PC-9 (cell line): ENCODE measurements at regions of chr1 and their contacts with region 1.

Region 1: DNA sequence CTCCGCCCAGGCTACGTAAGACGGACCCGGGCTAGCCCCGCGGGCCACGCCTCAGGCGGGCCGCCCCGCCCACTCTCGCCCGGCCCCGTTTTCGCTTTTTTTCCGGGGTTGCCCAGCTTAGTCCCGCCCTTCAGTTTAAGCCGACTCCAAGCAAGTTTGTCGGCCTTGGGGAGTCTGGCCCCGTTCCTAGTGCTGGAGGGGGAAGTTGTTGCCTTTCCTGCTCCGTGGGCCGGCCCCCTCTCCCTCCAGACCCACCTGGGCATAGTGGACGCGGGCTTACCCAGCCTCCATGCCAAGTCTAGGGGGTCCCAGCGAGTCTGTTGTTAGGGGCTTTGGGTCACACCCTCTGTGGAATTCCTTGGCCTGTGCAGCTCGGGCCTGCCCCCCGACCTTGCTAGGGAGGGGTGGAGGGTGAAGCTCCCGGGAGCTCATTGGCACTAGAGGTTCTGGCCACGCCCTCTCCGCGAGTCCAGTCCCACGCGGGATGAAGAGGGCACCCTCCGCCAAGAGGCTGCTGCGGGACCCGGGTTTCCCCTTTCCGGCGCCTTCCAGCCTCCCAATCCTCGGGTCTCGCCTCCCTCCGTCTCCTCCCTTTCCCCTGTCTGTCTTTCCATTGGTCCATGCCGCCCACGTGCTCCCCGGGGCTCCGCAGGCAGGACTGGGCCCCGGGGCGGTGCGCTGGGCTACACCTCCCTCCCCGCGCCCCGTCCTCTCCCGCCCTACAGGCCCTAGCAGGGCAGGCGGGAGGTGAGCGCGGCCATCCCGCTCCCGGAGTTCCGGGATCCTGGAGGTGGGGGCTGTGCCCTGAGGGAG is 3.3 kb downstream of the RUSC1 start:
- DNase-seq: peak; percentile 86 to 96
- H3K4me3 ChIP-seq: peak overlapping the region; percentile 96
- H3K27ac ChIP-seq: peak overlapping the region; percentile 49
- H3K4me1 ChIP-seq: peaks cover 9% of the 10 kb centered on the region; the same call in 1 of the 2 replicates
- H3K27me3 ChIP-seq: no peaks in the 10 kb centered on the region
- CTCF ChIP-seq: no peak

Region 2: GRCh38 chr1:155172732-155173477 is 151.1 kb before region 1 on chr1 and contains the start of gene KRTCAP2:
- CTCF ChIA-PET with region 1: no interaction called
- POLR2A ChIA-PET with region 1: interaction called, 3 read pairs
- intact Hi-C with region 1: loop called (anchors 2 kb)
- DNase-seq: peak; percentile 89 to 93
- H3K4me3 ChIP-seq: peak within 1 kb of the TSS; percentile 89
- H3K27ac ChIP-seq: peak within 1 kb of the TSS; percentile 59
- H3K4me1 ChIP-seq: peaks cover 30% of the 10 kb centered on the region
- H3K27me3 ChIP-seq: no peaks in the 10 kb centered on the region
- CTCF ChIP-seq: peak; percentile 94
- total RNA-seq, gene KRTCAP2: 112 and 156 TPM in 2 replicates

Region 3: DNA sequence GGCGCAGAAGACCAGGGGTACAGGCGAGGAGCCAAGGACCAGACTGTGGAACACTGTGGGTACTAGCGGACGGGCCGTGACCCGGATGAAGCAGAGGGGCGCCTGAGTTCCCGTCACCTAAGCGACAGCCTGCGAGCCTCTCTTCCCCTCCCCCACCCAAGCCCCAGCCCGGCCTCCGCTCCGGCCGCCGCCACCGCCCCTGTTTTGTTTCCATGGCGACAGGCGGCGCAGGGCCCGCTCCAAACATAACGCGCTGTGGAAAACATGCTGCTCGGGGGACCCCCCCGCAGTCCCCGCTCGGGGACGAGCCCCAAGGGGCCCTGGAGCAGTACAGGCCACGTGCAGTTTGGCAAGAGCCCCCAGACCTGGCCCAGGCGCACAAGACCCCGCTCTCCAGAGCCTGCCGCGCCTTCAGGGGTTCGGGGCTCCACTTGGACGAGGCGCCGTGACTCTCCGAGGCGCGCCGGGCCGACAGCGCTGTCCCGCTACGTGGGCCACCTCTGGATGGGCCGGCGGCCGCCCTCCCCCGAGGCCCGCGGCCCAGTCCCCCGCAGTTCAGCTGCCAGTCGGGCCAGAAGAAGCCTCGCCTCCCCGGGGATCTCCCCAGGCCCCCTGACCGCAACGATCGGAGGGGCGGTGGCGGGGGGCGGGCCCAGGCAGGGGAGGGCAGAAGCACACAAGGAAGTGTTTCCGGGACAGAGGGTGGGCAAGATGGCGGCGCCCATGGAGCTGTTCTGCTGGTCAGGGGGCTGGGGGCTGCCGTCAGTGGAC is 115.3 kb before region 1 on chr1 and contains the start of gene MTX1:
- CTCF ChIA-PET with region 1: no interaction called
- POLR2A ChIA-PET with region 1: no interaction called
- intact Hi-C with region 1: loop called (anchors 2 kb)
- DNase-seq: peak; percentile 60 to 85
- H3K4me3 ChIP-seq: peak within 1 kb of the TSS; percentile 78
- H3K27ac ChIP-seq: peak within 1 kb of the TSS; percentile 74
- H3K4me1 ChIP-seq: peaks cover 26% of the 10 kb centered on the region
- H3K27me3 ChIP-seq: no peaks in the 10 kb centered on the region
- CTCF ChIP-seq: no peak
- total RNA-seq, gene MTX1: 56.1 and 68.9 TPM in 2 replicates

Region 4: GRCh38 chr1:155261852-155262673 is 61.9 kb before region 1 on chr1 and contains the start of gene SCAMP3:
- CTCF ChIA-PET with region 1: no interaction called
- POLR2A ChIA-PET with region 1: interaction called, 3 read pairs
- intact Hi-C with region 1: loop called (anchors 5 kb)
- DNase-seq: peak; percentile 91 to 96
- H3K4me3 ChIP-seq: peak within 1 kb of the TSS; percentile 89
- H3K27ac ChIP-seq: peak within 1 kb of the TSS; percentile 54
- H3K4me1 ChIP-seq: peaks cover 18% of the 10 kb centered on the region
- H3K27me3 ChIP-seq: no peaks in the 10 kb centered on the region
- CTCF ChIP-seq: no peak
- total RNA-seq, gene SCAMP3: 56.9 and 64.1 TPM in 2 replicates

Region 5: DNA sequence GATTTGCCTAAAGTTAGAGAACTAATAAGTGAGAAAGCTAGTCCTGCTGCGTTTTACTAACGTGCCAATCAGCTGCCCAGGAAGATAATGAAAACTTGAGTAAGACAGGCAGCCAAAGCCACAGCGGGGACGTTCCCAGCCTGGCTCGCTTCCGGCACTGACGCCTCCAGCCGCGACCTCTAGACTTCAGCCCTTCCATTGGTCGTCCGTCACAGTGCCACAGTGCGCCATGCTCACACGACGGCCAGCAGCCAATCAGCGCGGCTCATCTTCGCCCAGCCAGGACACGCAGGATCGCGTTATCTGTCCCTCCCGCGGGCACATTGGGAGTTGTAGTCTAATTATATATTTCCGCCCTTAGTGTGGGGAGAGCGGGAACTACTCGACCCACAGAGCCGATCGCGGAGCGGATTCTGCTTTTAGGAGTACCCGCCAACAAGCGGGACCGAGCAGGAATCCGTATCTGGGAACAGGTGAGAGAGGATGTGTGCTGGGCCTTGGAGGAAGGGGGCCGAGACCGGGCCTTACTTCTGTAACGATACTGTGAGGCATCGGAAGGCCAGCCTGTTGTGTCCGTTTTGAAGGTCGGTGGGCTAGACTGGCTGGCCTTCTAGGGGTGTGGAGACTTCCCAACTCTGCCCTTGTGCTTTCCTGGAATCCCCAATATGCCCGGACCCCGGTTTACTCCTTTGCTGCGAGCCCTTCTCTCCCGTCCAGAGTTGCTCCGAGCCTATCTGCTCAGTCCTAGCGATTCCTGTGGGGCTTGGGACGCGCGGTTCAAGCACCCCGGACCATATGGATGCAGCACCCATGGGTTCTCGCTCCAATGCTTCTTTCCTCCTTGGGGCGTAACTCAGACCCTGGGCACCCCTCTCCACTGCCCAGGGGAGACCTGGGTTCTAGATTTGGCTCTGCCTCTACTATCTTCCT is 15.2 kb before region 1 on chr1 and contains the start of gene FDPS:
- CTCF ChIA-PET with region 1: no interaction called
- POLR2A ChIA-PET with region 1: interaction called, 24 read pairs
- intact Hi-C with region 1: loop called (anchors 1 kb)
- DNase-seq: peak; percentile 97
- H3K4me3 ChIP-seq: peak within 1 kb of the TSS; percentile 88
- H3K27ac ChIP-seq: peak within 1 kb of the TSS; percentile 91
- H3K4me1 ChIP-seq: peaks cover 26% of the 10 kb centered on the region
- H3K27me3 ChIP-seq: no peaks in the 10 kb centered on the region
- CTCF ChIP-seq: no peak
- total RNA-seq, gene FDPS: 397 and 568 TPM in 2 replicates

Region 6: DNA sequence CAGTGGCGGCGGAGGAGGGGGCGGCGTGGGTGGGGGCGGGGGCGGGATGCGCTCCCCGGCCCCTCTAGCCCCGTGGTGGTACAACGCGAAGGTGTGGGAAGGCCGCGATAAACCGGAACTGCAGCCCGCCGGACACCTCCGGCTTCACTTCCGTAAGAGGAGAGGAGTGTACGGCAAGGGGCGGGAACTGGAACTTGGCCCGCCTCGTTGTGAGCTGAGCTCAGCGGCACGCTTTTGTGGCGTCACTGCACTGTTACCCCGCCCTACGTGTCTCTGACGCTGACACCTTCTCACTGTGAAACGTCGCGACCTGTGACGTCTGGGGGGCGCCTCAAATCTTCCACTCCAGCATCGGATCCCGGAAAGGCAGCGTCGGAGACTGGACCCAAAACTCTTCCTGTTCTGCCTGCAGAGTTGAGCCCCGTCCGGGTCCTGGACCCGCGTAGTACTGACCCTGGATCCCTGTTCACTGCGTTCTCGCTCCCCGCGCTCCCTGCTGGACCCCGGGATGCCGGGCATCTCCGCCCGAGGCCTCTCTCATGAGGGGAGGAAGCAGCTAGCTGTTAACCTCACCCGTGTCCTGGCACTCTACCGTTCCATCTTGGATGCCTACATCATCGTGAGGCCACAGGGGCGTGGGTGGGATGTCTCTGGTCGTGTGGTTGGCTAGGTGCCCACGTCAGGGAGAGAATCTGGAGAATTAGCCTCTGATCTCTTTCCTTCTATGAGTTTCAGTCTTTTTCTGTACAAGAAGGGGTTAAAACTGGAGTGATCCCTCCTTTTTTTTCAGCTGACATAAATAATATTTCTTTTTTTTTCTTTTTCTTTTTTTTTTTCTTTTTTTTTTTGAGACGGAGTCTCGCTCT is 1404.8 kb after region 1 on chr1 and contains the start of gene ISG20L2:
- CTCF ChIA-PET with region 1: no interaction called
- POLR2A ChIA-PET with region 1: no interaction called
- intact Hi-C with region 1: no loop called
- DNase-seq: peak; percentile 93 to 94
- H3K4me3 ChIP-seq: peak within 1 kb of the TSS; percentile 90
- H3K27ac ChIP-seq: peak within 1 kb of the TSS; percentile 46
- H3K4me1 ChIP-seq: peaks cover 30% of the 10 kb centered on the region
- H3K27me3 ChIP-seq: no peaks in the 10 kb centered on the region
- CTCF ChIP-seq: no peak
- total RNA-seq, gene ISG20L2: 25.4 and 33.2 TPM in 2 replicates